Caco-2 (cell line): ENCODE measurements at regions of chr2 and their contacts with region 1.

Region 1: DNA sequence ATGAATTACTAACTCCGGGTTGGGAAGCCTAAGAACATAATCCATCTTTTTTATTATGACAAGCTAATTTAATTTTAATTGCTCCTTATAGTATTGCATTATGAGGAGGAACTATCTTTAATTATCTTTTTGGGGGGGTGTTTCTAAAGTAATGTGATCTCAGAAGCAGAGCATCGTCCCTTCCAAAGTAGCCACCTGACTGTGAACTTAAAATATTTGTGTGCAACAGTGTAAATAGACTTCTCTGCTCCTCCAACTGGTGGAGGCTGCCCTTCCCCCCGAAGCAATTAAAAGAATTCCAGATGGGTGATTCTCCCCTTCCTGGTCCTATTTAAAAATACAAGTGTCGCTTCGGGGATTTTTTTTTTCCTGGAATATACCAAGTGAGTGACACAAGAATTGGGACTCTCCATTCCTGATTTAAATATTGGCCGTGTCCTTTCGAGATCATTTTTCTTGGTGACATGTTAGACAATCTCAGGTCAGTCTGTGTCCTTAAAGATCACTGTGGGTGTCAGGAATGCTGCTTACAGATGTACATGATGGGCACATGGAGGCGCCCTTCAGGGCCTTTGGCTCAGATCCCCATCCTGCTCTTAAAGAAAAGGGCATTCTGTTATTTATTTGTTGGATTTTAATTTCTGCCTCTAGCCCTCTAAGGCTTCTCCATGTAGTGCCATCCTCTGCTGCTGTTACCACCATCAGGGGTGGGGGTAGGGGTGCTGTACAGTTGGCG is 55.8 kb downstream of the TCF7L1 start:
- DNase-seq: peak in 1 of 2 experiments; percentile 32
- H3K4me3 ChIP-seq: no peak overlapping the region
- H3K4me3 Mint-ChIP-seq: no peak overlapping the region
- H3K27ac Mint-ChIP-seq: no peak overlapping the region
- H3K4me1 ChIP-seq: peaks cover 48% of the 10 kb centered on the region
- H3K4me1 Mint-ChIP-seq: peaks cover 29% of the 10 kb centered on the region
- H3K27me3 ChIP-seq: no peaks in the 10 kb centered on the region
- H3K27me3 Mint-ChIP-seq: no peaks in the 10 kb centered on the region
- CTCF ChIP-seq: no peak

Region 2: DNA sequence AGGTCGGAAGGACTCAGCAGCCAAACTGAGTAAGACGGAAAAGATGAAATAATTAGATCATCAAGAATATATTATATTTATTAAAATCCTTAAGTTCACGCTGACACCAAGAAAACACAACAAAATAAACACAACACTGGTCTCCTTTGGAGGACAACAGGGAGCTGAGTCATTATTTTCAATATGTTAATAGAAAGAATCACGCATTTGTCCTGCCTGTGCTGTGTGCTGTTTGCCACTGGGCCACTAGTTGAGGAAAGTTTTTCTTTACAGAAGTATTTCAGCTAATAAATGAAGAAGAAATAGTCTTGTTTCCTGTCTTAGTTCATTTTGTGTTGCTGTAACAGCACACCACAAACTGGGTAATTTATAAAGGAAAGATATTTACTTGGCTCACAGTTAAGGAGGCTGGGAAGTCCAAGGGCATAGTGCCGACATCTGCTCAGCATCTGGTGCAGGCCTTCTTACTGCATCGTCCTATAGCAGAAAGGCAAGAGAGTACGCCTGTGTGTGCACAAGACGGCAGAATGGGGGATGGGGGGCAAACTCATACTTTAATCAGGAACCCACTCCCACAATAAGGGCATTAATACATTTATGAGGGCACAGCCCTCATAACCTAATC is 32.2 kb after region 1 on chr2:
- CTCF ChIA-PET with region 1: interaction called, 11 read pairs
- POLR2A ChIA-PET with region 1: no interaction called
- intact Hi-C with region 1: no loop called
- DNase-seq: no peak
- H3K4me3 ChIP-seq: no peak overlapping the region
- H3K4me3 Mint-ChIP-seq: no peak overlapping the region
- H3K27ac Mint-ChIP-seq: no peak overlapping the region
- H3K4me1 ChIP-seq: no peaks in the 10 kb centered on the region
- H3K4me1 Mint-ChIP-seq: no peaks in the 10 kb centered on the region
- H3K27me3 ChIP-seq: no peaks in the 10 kb centered on the region
- H3K27me3 Mint-ChIP-seq: no peaks in the 10 kb centered on the region
- CTCF ChIP-seq: no peak

Region 3: GRCh38 chr2:85230679-85231467 is 41.9 kb after region 1 on chr2:
- CTCF ChIA-PET with region 1: no interaction called
- POLR2A ChIA-PET with region 1: no interaction called
- intact Hi-C with region 1: loop called (anchors 5 kb)
- DNase-seq: peak; percentile 60 to 62
- H3K4me3 ChIP-seq: no peak overlapping the region
- H3K4me3 Mint-ChIP-seq: no peak overlapping the region
- H3K27ac Mint-ChIP-seq: no peak overlapping the region
- H3K4me1 ChIP-seq: peaks cover 12% of the 10 kb centered on the region
- H3K4me1 Mint-ChIP-seq: peaks cover 21% of the 10 kb centered on the region
- H3K27me3 ChIP-seq: no peaks in the 10 kb centered on the region
- H3K27me3 Mint-ChIP-seq: no peaks in the 10 kb centered on the region
- CTCF ChIP-seq: peak in 1 of 2 experiments; percentile 39

Region 4: GRCh38 chr2:85255813-85256594 is 67.0 kb after region 1 on chr2:
- CTCF ChIA-PET with region 1: interaction called, 4 read pairs
- POLR2A ChIA-PET with region 1: interaction called, 5 read pairs
- intact Hi-C with region 1: loop called (anchors 1 kb)
- DNase-seq: peak; percentile 92 to 95
- H3K4me3 ChIP-seq: peak overlapping the region; percentile 29
- H3K4me3 Mint-ChIP-seq: peak overlapping the region; percentile 83
- H3K27ac Mint-ChIP-seq: peak overlapping the region; percentile 97
- H3K4me1 ChIP-seq: peaks cover 78% of the 10 kb centered on the region
- H3K4me1 Mint-ChIP-seq: peaks cover 80% of the 10 kb centered on the region
- H3K27me3 ChIP-seq: no peaks in the 10 kb centered on the region
- H3K27me3 Mint-ChIP-seq: no peaks in the 10 kb centered on the region
- CTCF ChIP-seq: no peak

Region 5: DNA sequence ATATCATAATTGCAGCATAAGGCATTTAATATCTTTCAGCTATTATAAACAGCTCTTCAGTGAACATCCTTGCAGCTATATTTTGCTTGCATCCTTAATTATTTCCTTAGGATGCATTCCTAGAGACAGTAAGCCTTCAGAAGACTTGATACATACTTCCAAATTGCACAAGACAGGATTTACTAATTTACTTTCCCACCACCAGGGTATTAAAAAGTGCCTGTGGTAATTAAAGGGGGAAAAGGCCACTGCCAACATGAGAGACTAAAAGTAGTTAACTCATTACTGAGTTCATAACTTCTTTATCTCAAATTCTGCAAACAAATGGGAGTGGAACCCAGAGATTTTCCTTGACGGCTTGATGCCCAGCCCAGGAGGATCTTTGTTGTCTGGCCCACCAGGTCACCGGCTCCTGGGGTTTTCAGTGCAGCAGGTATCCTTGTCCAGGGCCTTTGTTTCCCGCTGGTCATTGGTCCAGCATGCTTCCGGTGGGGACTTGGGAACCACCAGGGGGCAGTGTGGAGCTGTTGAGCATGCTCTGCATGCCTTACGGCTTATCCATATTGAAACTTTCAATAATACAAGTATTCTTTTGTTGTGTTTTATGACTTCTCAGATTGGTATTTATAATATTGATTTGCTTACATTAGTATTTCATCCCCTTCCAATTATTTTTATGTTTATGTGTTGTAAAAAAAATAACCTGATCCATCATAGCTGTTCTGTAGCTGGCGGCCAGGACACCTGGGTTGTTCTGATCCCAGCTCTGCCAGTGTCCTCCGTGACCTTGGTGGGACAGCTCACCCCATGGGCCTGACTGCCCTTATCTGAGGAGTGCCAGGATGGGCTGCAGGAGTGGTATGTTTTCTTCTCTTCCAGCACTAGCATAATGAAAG is 77.4 kb after region 1 on chr2:
- CTCF ChIA-PET with region 1: interaction called, 3 read pairs
- POLR2A ChIA-PET with region 1: no interaction called
- intact Hi-C with region 1: loop called (anchors 1 kb)
- DNase-seq: peak; percentile 79 to 85
- H3K4me3 ChIP-seq: no peak overlapping the region
- H3K4me3 Mint-ChIP-seq: no peak overlapping the region
- H3K27ac Mint-ChIP-seq: no peak overlapping the region
- H3K4me1 ChIP-seq: peaks cover 57% of the 10 kb centered on the region
- H3K4me1 Mint-ChIP-seq: peaks cover 55% of the 10 kb centered on the region
- H3K27me3 ChIP-seq: no peaks in the 10 kb centered on the region
- H3K27me3 Mint-ChIP-seq: no peaks in the 10 kb centered on the region
- CTCF ChIP-seq: peak; percentile 87 to 96

Region 6: DNA sequence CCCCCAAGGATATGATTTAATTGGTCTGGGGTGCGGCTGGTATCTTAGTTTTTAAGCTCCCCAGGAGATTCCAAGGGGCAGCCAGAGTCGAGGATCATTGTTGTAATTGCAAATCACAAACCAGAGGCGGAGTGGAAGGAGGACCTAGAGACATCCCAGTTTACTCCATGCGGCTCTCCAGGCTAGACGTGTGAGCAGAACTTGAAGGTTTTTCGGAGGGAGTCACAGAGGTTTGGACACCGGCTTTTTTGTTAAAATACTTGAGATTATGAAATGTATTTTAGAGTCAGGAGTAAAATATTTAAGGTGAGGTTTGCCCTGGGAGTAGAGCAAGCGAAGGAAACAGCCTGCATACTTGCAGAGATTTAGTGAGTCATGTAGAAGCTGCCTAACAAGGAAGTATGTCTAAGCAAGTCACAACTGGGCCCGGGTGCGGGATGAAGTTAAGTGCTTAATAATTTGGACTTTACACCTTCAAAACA is 99.3 kb after region 1 on chr2:
- CTCF ChIA-PET with region 1: interaction called, 6 read pairs
- POLR2A ChIA-PET with region 1: no interaction called
- intact Hi-C with region 1: loop called (anchors 1 kb)
- DNase-seq: peak; percentile 55 to 61
- H3K4me3 ChIP-seq: no peak overlapping the region
- H3K4me3 Mint-ChIP-seq: peak overlapping the region; percentile 10
- H3K27ac Mint-ChIP-seq: peak overlapping the region; percentile 63
- H3K4me1 ChIP-seq: peaks cover 16% of the 10 kb centered on the region
- H3K4me1 Mint-ChIP-seq: peaks cover 24% of the 10 kb centered on the region
- H3K27me3 ChIP-seq: no peaks in the 10 kb centered on the region
- H3K27me3 Mint-ChIP-seq: no peaks in the 10 kb centered on the region
- CTCF ChIP-seq: no peak

Region 7: GRCh38 chr2:85785027-85785822 is 596.2 kb after region 1 on chr2:
- CTCF ChIA-PET with region 1: no interaction called
- POLR2A ChIA-PET with region 1: no interaction called
- intact Hi-C with region 1: no loop called
- DNase-seq: no peak
- H3K4me3 ChIP-seq: no peak overlapping the region
- H3K4me3 Mint-ChIP-seq: no peak overlapping the region
- H3K27ac Mint-ChIP-seq: no peak overlapping the region
- H3K4me1 ChIP-seq: no peaks in the 10 kb centered on the region
- H3K4me1 Mint-ChIP-seq: no peaks in the 10 kb centered on the region
- H3K27me3 ChIP-seq: no peaks in the 10 kb centered on the region
- H3K27me3 Mint-ChIP-seq: peaks cover 9% of the 10 kb centered on the region
- CTCF ChIP-seq: no peak